ENCODE measurements at regions of chr2 and their contacts with region 1.

Region 1: DNA sequence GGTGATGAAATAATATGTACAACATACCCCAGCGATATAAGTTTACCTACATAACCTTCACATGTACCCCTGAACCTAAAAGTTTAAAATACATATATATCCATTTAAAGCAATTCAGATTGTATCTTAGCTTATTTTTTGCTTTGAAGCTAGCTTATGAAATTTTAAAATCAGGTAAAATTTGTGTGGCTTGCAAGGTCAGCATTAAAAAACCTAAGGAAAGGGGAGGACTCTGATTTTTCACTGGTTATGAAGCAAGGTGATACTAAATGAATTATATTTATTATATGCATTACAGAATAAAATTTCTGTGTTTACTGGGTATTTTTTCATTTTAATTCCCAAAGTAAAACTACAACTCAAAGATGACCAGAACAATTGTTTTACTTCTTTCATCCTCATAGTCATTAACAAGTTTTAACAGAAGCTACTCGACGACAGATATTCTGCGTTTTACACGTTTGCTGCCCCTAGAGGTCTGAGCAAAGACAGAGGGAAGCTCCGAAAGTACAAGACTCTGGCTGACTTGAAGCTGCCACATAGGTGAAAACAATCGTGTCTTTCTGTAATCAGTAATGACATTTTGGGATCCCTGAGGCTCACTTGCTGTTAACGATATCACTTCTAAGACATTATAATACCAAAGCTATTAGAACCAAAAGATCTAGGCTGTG is 17.1 kb downstream of the PKP4 start:
- DNase-seq: no peak
- H3K4me3 ChIP-seq: no peak overlapping the region
- CTCF ChIP-seq: no peak
- POLR2A ChIP-seq: no peak

Region 2: GRCh38 chr2:158505448-158505934 is 31.6 kb after region 1 on chr2:
- intact Hi-C with region 1: loop called (anchors 1 kb)
- DNase-seq: no peak
- H3K4me3 ChIP-seq: no peak overlapping the region
- CTCF ChIP-seq: no peak
- POLR2A ChIP-seq: no peak